ENCODE measurements at regions of chr7 and their contacts with region 1.

Region 1: DNA sequence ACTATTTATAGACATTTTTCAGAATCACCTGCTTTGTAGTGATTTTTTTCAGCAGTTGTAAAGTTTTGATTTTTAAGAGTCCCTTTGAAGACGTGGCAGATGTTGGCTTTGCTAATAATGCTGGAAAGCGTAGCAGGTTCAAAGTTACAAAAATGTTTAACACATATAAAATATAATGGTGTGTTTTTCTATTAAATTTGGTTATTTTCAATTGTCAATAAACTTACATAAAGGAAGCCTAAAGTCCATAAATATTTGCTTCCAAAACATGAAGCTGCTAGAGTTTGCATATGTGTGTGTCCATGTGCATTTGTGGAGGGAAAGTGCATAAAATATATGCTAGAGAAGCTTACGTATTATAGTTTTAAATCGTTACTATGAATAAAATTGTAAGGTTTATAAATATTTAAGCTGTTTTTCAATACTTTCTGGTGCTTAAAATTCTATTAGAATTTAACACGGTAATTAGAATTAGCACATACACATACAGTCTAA is 3.7 kb downstream of the MEOX2 start:
- DNase-seq: no peak
- H3K4me3 ChIP-seq: peak overlapping the region; percentile 75
- H3K27ac ChIP-seq: peak overlapping the region; percentile 93
- H3K4me1 ChIP-seq: peaks cover 40% of the 10 kb centered on the region
- H3K27me3 ChIP-seq: peaks cover 49% of the 10 kb centered on the region
- CTCF ChIP-seq: no peak

Region 2: GRCh38 chr7:15603124-15603523 is 79.7 kb before region 1 on chr7:
- intact Hi-C with region 1: no loop called
- DNase-seq: no peak
- H3K4me3 ChIP-seq: no peak overlapping the region
- H3K27ac ChIP-seq: no peak overlapping the region
- H3K4me1 ChIP-seq: no peaks in the 10 kb centered on the region
- H3K27me3 ChIP-seq: no peaks in the 10 kb centered on the region
- CTCF ChIP-seq: no peak

Region 3: DNA sequence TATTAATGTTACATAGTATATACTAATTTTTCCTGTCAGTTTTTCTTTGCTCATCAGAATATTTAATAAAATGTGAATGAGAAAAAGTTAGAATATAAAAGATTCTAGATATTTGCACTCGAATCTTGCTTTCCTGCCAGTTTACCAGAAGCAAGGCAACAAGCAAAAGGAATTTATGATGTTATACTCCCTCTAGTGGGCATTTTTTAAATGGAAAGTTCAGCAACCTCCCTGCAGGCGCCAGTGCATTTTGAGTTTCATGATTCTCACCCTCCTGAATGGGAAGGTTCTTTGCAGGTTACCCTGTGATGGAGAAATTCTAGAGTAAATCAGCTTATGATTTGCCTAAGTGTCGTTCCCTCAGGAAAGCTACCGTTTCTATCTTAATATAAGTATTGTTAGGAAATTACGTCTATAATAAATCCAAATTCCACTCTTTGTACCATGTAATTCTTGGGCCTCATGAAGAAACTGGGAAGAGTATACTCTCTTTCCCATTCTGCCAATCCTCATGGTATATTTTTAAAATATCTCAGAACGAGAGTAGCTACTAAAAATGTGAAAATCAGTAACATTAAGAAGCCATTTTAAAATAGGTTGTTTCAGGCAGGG is 388.6 kb after region 1 on chr7:
- intact Hi-C with region 1: loop called (anchors 2 kb)
- DNase-seq: no peak
- H3K4me3 ChIP-seq: peak overlapping the region; percentile 29
- H3K27ac ChIP-seq: peak overlapping the region; percentile 86
- H3K4me1 ChIP-seq: peaks cover 24% of the 10 kb centered on the region
- H3K27me3 ChIP-seq: no peaks in the 10 kb centered on the region
- CTCF ChIP-seq: peak; percentile 91

Measured in left ventricle myocardium inferior (tissue), 1 donor.